Heart right ventricle (tissue), 16 donors: ENCODE measurements at regions of chr2 and their contacts with region 1.

Region 1: GRCh38 chr2:127591221-127591923 is 54.6 kb upstream of the GPR17 start:
- DNase-seq: peak; percentile 57 to 65
- ATAC-seq: peak; percentile 74 to 94 (median 87)
- H3K4me3 ChIP-seq: no peak overlapping the region
- H3K27ac ChIP-seq: no peak overlapping the region
- H3K4me1 ChIP-seq: peaks cover 0 to 4% (median 0%) of the 10 kb centered on the region in 9 donors
- H3K27me3 ChIP-seq: no peaks in the 10 kb centered on the region
- CTCF ChIP-seq: peak; percentile 91 to 97 (median 95)

Region 2: GRCh38 chr2:127640082-127641072 is 49.0 kb after region 1 on chr2:
- intact Hi-C with region 1: loop called in 2 of 10 experiments (anchors 5 kb)
- DNase-seq: peak in 1 of 2 donors; percentile 13
- ATAC-seq: no peak
- H3K4me3 ChIP-seq: no peak overlapping the region
- H3K27ac ChIP-seq: peak overlapping the region in 9 of 10 donors; percentile 69 to 95 (median 89)
- H3K4me1 ChIP-seq: peaks cover 28 to 98% (median 61%) of the 10 kb centered on the region in 9 donors
- H3K27me3 ChIP-seq: no peaks in the 10 kb centered on the region
- CTCF ChIP-seq: peak in 7 of 9 donors; percentile 12 to 51 (median 28)

Region 3: DNA sequence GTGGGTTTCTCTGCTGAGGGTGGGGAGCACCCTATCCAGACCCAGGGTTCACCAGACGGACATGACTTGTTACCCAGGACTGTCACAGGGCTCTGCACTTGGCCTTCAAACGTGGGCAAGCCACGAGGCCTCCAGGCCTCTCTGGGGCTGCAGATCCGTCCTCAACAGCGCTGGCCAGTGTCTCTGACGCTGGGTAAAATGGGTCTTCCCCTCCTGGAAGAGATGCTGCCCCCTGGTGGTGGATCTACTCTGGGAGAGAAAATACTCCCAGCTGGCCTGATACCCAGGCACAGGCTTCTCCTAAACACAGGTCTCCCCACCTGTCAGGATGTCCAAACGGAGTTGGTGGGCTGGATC is 58.3 kb after region 1 on chr2:
- intact Hi-C with region 1: loop called in 3 of 10 experiments (anchors 1 to 5 kb)
- DNase-seq: peak; percentile 76 to 88
- ATAC-seq: peak; percentile 0 to 51 (median 31)
- H3K4me3 ChIP-seq: no peak overlapping the region
- H3K27ac ChIP-seq: peak overlapping the region; percentile 42 to 95 (median 83)
- H3K4me1 ChIP-seq: peaks cover 66 to 98% (median 86%) of the 10 kb centered on the region in 9 donors
- H3K27me3 ChIP-seq: no peaks in the 10 kb centered on the region
- CTCF ChIP-seq: peak; percentile 85 to 93 (median 89)